ENCODE measurements at regions of chr4 and their contacts with region 1.

Region 1: GRCh38 chr4:2598511-2599303 is 62.3 kb downstream of the FAM193A start:
- DNase-seq: no peak
- ATAC-seq: peak; percentile 61
- H3K4me3 ChIP-seq: no peak overlapping the region
- H3K27ac ChIP-seq: no peak overlapping the region
- H3K4me1 ChIP-seq: peaks cover 68% of the 10 kb centered on the region
- H3K27me3 ChIP-seq: no peaks in the 10 kb centered on the region
- CTCF ChIP-seq: peak; percentile 24; the same call in 1 of the 2 replicates
- EP300 ChIP-seq: no peak
- POLR2A ChIP-seq: no peak
- RAD21 ChIP-seq: no peak

Region 2: DNA sequence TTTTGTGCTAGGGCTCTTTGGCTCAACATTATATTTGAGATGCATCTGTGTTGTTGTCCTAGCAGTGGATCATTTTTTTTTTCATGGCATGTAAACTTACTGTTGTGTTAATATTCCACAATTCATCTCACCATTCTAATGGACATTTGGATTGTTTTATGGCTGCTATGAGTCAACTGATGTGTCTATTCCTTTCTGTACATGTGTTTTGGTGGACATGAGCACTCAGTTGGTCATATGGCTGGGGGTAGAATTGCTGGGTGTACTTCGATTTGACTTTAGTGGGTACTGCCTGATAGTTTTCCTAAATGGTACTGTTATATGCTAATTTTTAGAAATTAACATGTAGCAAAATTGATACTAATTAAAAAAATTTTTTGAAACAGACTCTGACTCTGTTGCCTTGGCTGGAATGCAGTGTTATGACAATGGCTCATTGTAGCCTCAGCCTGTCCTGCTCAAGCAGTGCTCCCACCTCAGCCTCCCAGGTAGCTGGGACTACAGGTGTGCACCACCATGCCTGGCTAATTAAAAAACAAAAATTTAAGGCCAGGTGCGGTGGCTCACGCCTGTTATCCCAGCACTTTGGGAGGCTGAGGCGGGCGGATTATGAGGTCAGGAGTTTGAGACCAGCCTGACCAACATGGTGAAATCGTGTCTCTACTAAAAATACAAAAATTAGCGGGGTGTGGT is 53.2 kb before region 1 on chr4:
- CTCF ChIA-PET with region 1: no interaction called
- POLR2A ChIA-PET with region 1: no interaction called
- in situ Hi-C with region 1: no loop called
- intact Hi-C with region 1: loop called (anchors 10 kb)
- DNase-seq: no peak
- ATAC-seq: no peak
- H3K4me3 ChIP-seq: no peak overlapping the region
- H3K27ac ChIP-seq: no peak overlapping the region
- H3K4me1 ChIP-seq: peaks cover 40% of the 10 kb centered on the region
- H3K27me3 ChIP-seq: no peaks in the 10 kb centered on the region
- CTCF ChIP-seq: no peak
- EP300 ChIP-seq: no peak
- POLR2A ChIP-seq: no peak
- RAD21 ChIP-seq: no peak

Measured in HepG2 (cell line).